ENCODE measurements at regions of chr7 and their contacts with region 1.

Region 1: DNA sequence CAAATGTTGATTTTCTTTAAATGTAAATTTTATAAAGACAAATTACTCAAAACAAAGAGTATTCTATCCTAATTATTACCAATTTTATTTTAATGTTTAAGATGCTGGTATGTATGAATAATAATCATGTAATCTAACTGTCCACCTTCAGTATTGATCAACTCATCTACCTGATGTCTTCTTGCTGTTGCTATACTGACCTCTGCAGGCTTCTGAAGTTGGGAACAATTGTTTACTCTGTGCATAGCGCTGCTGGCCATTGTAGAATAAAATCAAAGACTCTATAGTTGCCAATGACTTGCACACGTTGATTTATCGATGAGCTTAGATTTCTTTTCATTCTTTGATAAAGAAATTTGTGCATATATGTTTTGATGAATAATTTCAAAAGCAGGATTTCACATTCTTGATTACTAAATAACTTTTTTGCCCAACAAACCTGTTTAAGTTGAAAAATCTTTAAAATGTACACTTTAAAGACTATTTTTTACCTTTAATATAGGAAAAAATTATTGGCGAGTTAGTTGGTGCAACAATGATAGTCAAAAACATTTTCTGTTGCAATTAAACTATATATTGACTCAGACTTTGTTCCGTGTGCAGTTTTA is 282.3 kb downstream of the TFEC start:
- DNase-seq: peak in 1 of 2 experiments; percentile 40
- H3K4me3 ChIP-seq: no peak overlapping the region
- H3K4me3 Mint-ChIP-seq: no peak overlapping the region
- H3K27ac Mint-ChIP-seq: no peak overlapping the region
- H3K4me1 ChIP-seq: no peaks in the 10 kb centered on the region
- H3K4me1 Mint-ChIP-seq: no peaks in the 10 kb centered on the region
- H3K27me3 ChIP-seq: no peaks in the 10 kb centered on the region
- H3K27me3 Mint-ChIP-seq: no peaks in the 10 kb centered on the region
- CTCF ChIP-seq: peak; percentile 29 to 64

Region 2: GRCh38 chr7:115707258-115708012 is 40.8 kb before region 1 on chr7:
- CTCF ChIA-PET with region 1: no interaction called
- POLR2A ChIA-PET with region 1: no interaction called
- intact Hi-C with region 1: loop called (anchors 2 kb)
- DNase-seq: peak; percentile 38 to 47
- H3K4me3 ChIP-seq: no peak overlapping the region
- H3K4me3 Mint-ChIP-seq: no peak overlapping the region
- H3K27ac Mint-ChIP-seq: peak overlapping the region; percentile 62
- H3K4me1 ChIP-seq: no peaks in the 10 kb centered on the region
- H3K4me1 Mint-ChIP-seq: no peaks in the 10 kb centered on the region
- H3K27me3 ChIP-seq: no peaks in the 10 kb centered on the region
- H3K27me3 Mint-ChIP-seq: peaks cover 6% of the 10 kb centered on the region
- CTCF ChIP-seq: peak; percentile 44 to 51

Region 3: GRCh38 chr7:115910541-115911164 is 162.4 kb after region 1 on chr7:
- CTCF ChIA-PET with region 1: no interaction called
- POLR2A ChIA-PET with region 1: no interaction called
- intact Hi-C with region 1: loop called (anchors 5 kb)
- DNase-seq: peak in 1 of 2 experiments; percentile 25
- H3K4me3 ChIP-seq: no peak overlapping the region
- H3K4me3 Mint-ChIP-seq: no peak overlapping the region
- H3K27ac Mint-ChIP-seq: no peak overlapping the region
- H3K4me1 ChIP-seq: no peaks in the 10 kb centered on the region
- H3K4me1 Mint-ChIP-seq: peaks cover 5% of the 10 kb centered on the region
- H3K27me3 ChIP-seq: no peaks in the 10 kb centered on the region
- H3K27me3 Mint-ChIP-seq: no peaks in the 10 kb centered on the region
- CTCF ChIP-seq: peak; percentile 63 to 69

Measured in Caco-2 (cell line).